ENCODE measurements at regions of chr11 and their contacts with region 1.

Region 1: GRCh38 chr11:126440792-126441514 is 85.5 kb downstream of the ST3GAL4 start:
- DNase-seq: peak; percentile 71 to 90
- H3K4me3 ChIP-seq: no peak overlapping the region
- H3K4me1 ChIP-seq: peaks cover 11% of the 10 kb centered on the region
- H3K27me3 ChIP-seq: no peaks in the 10 kb centered on the region

Region 2: DNA sequence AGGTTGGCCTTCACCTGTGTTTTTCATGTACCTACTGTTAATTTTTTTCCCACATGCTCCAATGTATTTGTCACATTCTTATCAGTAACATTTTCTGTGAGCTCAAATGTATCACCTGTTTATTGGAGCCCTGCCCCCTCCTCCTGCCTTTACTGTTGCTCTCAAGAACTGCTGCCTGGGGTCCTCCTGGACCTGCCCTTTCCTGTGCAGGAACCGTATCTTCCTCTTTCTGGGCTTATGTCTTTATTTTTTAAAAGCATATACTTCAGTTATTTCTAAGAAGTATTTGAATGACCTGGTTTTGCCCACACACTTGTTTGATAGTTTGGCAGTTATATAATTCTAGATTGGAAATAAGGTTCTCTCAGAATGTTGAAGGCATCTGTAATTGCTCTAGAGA is 223.5 kb before region 1 on chr11:
- in situ Hi-C with region 1: no loop called
- DNase-seq: no peak
- H3K4me3 ChIP-seq: no peak overlapping the region
- H3K4me1 ChIP-seq: peaks cover 6% of the 10 kb centered on the region; the same call in 1 of the 2 replicates
- H3K27me3 ChIP-seq: no peaks in the 10 kb centered on the region

Region 3: DNA sequence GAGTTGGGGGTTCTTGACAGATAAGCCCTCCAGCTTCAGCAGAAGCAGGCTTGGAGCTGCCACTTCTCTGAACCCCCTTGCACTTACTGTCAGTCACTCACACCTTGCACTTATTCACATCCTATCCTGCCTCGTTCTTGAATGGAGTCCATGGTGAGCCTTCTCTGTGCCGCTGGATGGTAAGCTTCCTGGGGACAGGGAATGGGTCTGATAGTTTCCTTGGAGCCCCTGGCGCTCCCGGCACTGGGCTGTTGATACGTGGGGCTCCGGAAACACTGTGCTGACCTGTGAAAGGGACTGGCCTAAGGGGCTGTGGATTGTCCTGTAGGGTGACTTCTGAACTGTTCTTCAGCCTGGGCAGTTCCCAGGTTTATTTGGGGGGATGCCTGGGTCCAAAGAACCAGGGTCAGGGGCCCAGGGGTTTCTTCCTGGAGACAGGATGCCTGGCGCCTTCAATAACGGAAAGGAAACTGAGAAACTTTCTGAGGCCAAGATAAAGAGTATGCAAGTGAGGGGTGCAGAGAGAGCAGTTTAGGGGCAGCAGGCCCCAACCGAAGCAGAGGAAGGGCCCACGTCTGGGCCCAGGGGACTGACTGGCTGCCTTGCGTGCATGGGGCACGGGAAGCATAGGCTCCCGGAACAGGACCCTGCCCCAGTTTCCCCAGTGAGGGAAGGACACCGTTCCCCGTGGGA is 86.2 kb before region 1 on chr11:
- in situ Hi-C with region 1: no loop called
- DNase-seq: no peak
- H3K4me3 ChIP-seq: peak overlapping the region; percentile 48
- H3K4me1 ChIP-seq: peaks cover 26% of the 10 kb centered on the region
- H3K27me3 ChIP-seq: no peaks in the 10 kb centered on the region

Region 4: GRCh38 chr11:126391970-126392639 is 48.8 kb before region 1 on chr11:
- in situ Hi-C with region 1: no loop called
- DNase-seq: no peak
- H3K4me3 ChIP-seq: no peak overlapping the region
- H3K4me1 ChIP-seq: no peaks in the 10 kb centered on the region; the same call in 1 of the 2 replicates
- H3K27me3 ChIP-seq: no peaks in the 10 kb centered on the region

Region 5: GRCh38 chr11:127345819-127346459 is 905.0 kb after region 1 on chr11:
- in situ Hi-C with region 1: loop called (anchors 10 kb)
- DNase-seq: peak in 1 of 2 experiments; percentile 41
- H3K4me3 ChIP-seq: no peak overlapping the region
- H3K4me1 ChIP-seq: no peaks in the 10 kb centered on the region
- H3K27me3 ChIP-seq: no peaks in the 10 kb centered on the region

Region 6: DNA sequence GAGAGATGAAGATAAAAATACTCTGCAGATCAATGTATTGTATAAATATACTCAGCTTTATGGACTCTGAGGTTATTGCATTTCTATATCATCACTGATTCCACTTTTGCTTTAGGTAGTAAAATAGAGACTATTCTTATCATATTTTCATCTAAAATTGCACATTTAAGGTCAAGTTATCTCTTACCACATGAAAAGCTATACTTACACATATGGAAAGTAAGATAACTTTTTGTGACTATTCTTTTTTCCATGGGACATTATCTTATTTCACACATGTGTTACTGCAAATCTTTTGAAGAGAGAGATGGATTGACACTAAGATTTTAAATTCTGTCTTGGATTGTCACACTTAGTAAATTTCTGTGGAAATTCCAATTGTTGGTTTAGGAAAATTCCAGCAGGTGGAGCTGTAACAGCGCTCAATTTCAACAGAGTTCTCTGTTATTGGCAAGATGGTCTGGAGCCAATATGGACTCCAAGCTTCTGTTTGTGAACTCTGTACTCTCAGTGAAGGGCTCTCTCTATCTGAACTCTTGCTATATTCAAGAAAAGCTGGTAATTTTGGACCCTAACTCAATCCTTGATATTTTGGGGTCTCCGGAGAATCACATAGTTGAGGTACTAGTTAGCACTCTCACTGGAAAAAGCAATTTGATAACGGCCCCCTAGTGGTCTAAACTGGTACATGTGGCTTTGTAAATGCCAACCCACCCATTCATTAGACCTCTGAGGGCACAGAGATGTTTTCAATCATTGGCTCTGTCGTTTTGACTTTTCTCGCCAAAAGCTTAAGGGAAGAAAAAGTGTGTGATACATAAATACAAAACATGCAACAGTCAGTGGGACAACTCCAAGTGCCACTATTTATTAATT is 1716.7 kb after region 1 on chr11:
- in situ Hi-C with region 1: loop called (anchors 25 kb)
- DNase-seq: peak; percentile 47 to 73
- H3K4me3 ChIP-seq: no peak overlapping the region
- H3K4me1 ChIP-seq: no peaks in the 10 kb centered on the region
- H3K27me3 ChIP-seq: no peaks in the 10 kb centered on the region